CD4-positive, alpha-beta T cell (primary cell): ENCODE measurements at regions of chr1 and their contacts with region 1.

Region 1: DNA sequence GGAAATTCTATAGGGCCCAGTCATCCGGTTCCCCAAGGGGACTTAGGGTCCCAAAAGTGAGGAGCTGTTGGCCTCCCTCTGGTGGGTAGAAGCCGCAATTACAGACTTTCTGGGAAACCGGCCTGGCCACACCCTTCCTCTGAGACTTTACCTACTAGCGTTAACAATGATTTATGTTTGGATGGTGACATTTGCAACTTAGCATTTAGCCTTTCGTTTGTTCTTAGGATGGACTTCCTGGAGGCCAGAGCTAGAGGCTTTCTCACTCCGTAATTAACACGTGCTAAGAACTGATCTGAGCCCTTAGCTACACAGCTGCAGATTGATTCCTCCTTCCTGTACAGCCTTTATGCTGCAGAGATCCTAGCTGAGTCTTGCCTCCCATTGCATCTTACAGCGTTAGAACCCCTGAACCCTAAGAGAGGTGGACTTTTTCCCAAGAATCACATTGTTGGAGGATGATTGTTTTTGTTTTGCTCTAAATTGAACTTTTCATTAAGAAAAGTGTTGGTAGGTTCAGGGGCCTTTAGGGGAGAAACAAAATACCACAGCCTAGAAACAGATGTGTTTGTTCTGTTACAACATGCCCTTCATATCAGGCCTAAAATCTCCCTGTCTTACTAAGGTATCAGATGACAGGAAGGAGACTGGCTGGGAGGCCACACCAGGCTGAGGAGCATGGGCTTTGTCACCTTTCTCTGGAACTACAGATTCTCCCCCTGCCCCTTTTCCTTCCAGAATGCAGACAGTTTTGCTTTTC is 2.0 kb downstream of the S100A11 start:
- DNase-seq: peak; percentile 46 to 89 (median 61)
- ATAC-seq: peak; percentile 81
- H3K4me3 ChIP-seq: peak overlapping the region; percentile 88
- H3K4me3 Mint-ChIP-seq: peak overlapping the region; percentile 97
- H3K27ac ChIP-seq: peak overlapping the region; percentile 86
- H3K27ac Mint-ChIP-seq: peak overlapping the region; percentile 99
- H3K4me1 ChIP-seq: peaks cover 55% of the 10 kb centered on the region
- H3K4me1 Mint-ChIP-seq: peaks cover 58% of the 10 kb centered on the region
- H3K27me3 ChIP-seq: no peaks in the 10 kb centered on the region
- H3K27me3 Mint-ChIP-seq: no peaks in the 10 kb centered on the region
- CTCF ChIP-seq: peak; percentile 91

Region 2: GRCh38 chr1:151898513-151898991 is 136.3 kb before region 1 on chr1:
- CTCF ChIA-PET with region 1: interaction called, 6 read pairs
- POLR2A ChIA-PET with region 1: interaction called, 10 read pairs
- intact Hi-C with region 1: no loop called
- DNase-seq: peak; percentile 48 to 86 (median 68)
- ATAC-seq: peak; percentile 91
- H3K4me3 ChIP-seq: peak overlapping the region; percentile 39
- H3K4me3 Mint-ChIP-seq: peak overlapping the region; percentile 83
- H3K27ac ChIP-seq: peak overlapping the region; percentile 74 to 81
- H3K27ac Mint-ChIP-seq: peak overlapping the region; percentile 96
- H3K4me1 ChIP-seq: peaks cover 64% of the 10 kb centered on the region
- H3K4me1 Mint-ChIP-seq: peaks cover 79% of the 10 kb centered on the region
- H3K27me3 ChIP-seq: no peaks in the 10 kb centered on the region
- H3K27me3 Mint-ChIP-seq: no peaks in the 10 kb centered on the region
- CTCF ChIP-seq: no peak

Region 3: GRCh38 chr1:151909150-151910149 is 125.4 kb before region 1 on chr1 and contains the start of gene THEM4:
- CTCF ChIA-PET with region 1: no interaction called
- POLR2A ChIA-PET with region 1: interaction called, 12 read pairs
- intact Hi-C with region 1: no loop called
- DNase-seq: peak; percentile 80 to 94 (median 90)
- ATAC-seq: peak; percentile 82
- H3K4me3 ChIP-seq: peak within 1 kb of the TSS; percentile 70
- H3K4me3 Mint-ChIP-seq: peak within 1 kb of the TSS; percentile 88
- H3K27ac ChIP-seq: peak within 1 kb of the TSS; percentile 74 to 81
- H3K27ac Mint-ChIP-seq: peak within 1 kb of the TSS; percentile 89
- H3K4me1 ChIP-seq: peaks cover 46% of the 10 kb centered on the region
- H3K4me1 Mint-ChIP-seq: peaks cover 47% of the 10 kb centered on the region
- H3K27me3 ChIP-seq: no peaks in the 10 kb centered on the region
- H3K27me3 Mint-ChIP-seq: no peaks in the 10 kb centered on the region
- CTCF ChIP-seq: peak; percentile 12
- total RNA-seq, gene THEM4: 24.0 to 24.5 TPM

Region 4: DNA sequence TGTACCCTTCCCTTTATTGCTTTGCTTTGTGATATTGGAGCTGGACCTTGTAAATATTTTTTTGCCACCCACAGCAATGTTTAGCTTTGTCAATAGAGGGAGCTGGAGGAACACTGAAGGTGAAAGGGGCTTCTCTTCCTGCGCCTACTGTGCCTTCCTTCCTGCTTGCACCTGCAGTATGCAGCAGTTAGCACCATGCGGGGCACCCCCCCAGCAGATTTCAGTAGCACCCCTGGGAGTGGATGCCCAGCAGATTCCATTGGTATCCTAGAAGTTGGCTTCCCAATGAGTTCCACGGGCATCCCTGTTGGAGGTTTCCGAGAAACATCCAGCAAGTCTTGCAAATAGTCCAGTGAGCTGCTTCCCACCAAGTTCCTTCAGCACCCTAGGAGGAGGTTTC is 66.8 kb before region 1 on chr1:
- CTCF ChIA-PET with region 1: interaction called, 11 read pairs
- POLR2A ChIA-PET with region 1: interaction called, 3 read pairs
- intact Hi-C with region 1: no loop called
- DNase-seq: peak; percentile 20 to 83 (median 38)
- ATAC-seq: peak; percentile 99
- H3K4me3 ChIP-seq: no peak overlapping the region
- H3K4me3 Mint-ChIP-seq: no peak overlapping the region
- H3K27ac ChIP-seq: no peak overlapping the region
- H3K27ac Mint-ChIP-seq: no peak overlapping the region
- H3K4me1 ChIP-seq: peaks cover 9% of the 10 kb centered on the region
- H3K4me1 Mint-ChIP-seq: peaks cover 7% of the 10 kb centered on the region
- H3K27me3 ChIP-seq: no peaks in the 10 kb centered on the region
- H3K27me3 Mint-ChIP-seq: no peaks in the 10 kb centered on the region
- CTCF ChIP-seq: peak; percentile 72

Region 5: GRCh38 chr1:152047730-152048402 is 13.0 kb after region 1 on chr1:
- CTCF ChIA-PET with region 1: interaction called, 58 read pairs
- POLR2A ChIA-PET with region 1: interaction called, 75 read pairs
- intact Hi-C with region 1: loop called in 1 of 2 experiments (anchors 1 kb)
- DNase-seq: peak; percentile 65 to 95 (median 84)
- ATAC-seq: peak; percentile 89
- H3K4me3 ChIP-seq: peak overlapping the region; percentile 26
- H3K4me3 Mint-ChIP-seq: peak overlapping the region; percentile 72
- H3K27ac ChIP-seq: peak overlapping the region; percentile 94 to 96
- H3K27ac Mint-ChIP-seq: peak overlapping the region; percentile 96
- H3K4me1 ChIP-seq: peaks cover 39% of the 10 kb centered on the region
- H3K4me1 Mint-ChIP-seq: peaks cover 31% of the 10 kb centered on the region
- H3K27me3 ChIP-seq: peaks cover 0 to under 1% of the 10 kb centered on the region in 2 experiments
- H3K27me3 Mint-ChIP-seq: peaks cover 4% of the 10 kb centered on the region
- CTCF ChIP-seq: peak; percentile 52